Motor neuron (in vitro differentiated cells): ENCODE measurements at regions of chr13 and their contacts with region 1.

Region 1: DNA sequence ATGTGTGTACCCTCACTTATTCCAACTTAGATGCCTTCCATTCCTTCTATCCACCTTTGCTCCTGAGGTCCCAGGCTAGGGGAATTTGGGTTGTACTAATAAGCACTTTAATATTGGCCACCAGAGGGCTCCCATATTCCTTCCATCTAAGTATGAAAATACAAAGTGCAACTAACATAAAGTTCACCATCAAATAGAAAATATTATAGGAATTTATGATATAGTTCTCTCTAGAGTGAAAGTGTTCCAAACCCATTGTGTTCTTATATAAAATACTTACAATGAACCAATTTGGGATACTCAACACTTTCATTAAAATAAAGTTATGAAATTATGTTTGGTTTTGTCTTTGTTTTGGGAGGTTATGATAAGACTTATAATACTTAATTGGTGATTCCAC is 62.3 kb downstream of the ITGBL1 start:
- ATAC-seq: peak in 3 of 8 experiments; percentile 40 to 60 (median 57)
- H3K4me3 ChIP-seq: no peak overlapping the region
- H3K27ac ChIP-seq: no peak overlapping the region
- H3K4me1 ChIP-seq: no peaks in the 10 kb centered on the region

Region 2: DNA sequence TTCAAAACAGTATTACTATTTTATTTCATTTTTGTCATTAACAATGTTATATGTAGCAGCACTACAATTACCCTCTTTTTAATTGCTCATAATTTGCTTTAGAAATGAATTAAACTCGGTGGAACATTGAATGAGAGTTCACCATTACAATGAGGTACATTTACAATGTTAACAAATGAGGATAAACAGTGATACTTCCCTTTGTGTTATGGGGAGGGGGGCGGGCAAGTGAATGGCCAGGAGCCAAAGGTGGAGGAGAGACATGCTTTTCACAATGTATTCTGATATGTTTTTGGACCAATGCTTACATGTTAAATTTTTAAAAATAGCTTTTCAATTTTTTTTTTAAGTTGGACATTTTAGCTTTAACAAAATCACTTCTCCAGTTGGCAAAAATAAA is 132.7 kb before region 1 on chr13:
- in situ Hi-C with region 1: no loop called
- ATAC-seq: no peak
- H3K4me3 ChIP-seq: no peak overlapping the region
- H3K27ac ChIP-seq: no peak overlapping the region
- H3K4me1 ChIP-seq: no peaks in the 10 kb centered on the region

Region 3: DNA sequence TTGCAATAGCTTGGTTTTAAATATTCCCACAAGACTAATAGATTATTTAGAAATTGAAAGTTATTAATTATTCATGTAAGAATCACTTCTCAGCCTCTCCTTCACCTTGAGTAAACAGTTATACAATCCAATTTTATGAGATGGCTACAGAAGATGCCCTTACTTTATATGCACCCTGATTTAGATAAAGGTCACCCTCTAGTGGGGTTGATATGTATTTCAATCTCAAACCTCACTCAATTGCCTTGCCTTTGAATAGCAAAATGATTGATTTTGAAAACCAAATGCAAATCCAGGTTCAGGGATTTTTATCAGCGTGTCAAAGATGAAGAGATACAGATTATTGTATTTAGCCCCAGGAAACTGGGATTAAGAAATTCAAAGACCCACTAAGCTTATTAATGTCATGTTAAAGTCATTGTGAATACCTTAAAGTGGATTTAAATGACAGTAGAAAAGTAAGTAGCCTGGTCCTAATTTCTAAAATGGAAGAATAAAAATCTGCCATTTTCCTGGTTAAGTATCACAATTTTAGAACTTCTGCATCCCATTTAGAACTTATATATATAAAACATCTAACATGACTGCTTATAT is 242.8 kb after region 1 on chr13:
- in situ Hi-C with region 1: loop called in 3 of 9 experiments (anchors 10 kb)
- ATAC-seq: peak in 4 of 8 experiments; percentile 44 to 80 (median 74)
- H3K4me3 ChIP-seq: no peak overlapping the region
- H3K27ac ChIP-seq: no peak overlapping the region
- H3K4me1 ChIP-seq: peaks cover 0 to 6% of the 10 kb centered on the region in 2 donors

Region 4: DNA sequence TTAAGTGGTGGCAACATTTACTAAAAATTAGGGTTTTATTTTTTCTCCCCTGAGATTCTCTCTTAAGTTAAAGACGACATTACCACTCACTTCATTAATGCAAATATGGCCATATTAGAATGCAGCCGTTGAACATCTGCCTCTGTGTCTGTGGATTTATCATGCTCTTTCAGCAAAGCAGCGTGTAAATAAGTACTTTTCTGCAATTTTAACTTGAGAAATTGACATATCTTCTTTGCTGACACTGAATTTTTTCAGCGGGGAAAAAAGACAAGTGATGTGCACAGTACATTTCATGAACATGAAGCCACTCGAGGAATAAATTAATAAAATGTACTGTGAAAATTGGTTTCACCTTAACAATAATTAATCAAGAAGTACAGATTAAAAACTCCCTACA is 344.1 kb after region 1 on chr13:
- in situ Hi-C with region 1: no loop called
- ATAC-seq: no peak
- H3K4me3 ChIP-seq: no peak overlapping the region
- H3K27ac ChIP-seq: no peak overlapping the region
- H3K4me1 ChIP-seq: peaks cover 0 to 4% of the 10 kb centered on the region in 2 donors

Region 5: DNA sequence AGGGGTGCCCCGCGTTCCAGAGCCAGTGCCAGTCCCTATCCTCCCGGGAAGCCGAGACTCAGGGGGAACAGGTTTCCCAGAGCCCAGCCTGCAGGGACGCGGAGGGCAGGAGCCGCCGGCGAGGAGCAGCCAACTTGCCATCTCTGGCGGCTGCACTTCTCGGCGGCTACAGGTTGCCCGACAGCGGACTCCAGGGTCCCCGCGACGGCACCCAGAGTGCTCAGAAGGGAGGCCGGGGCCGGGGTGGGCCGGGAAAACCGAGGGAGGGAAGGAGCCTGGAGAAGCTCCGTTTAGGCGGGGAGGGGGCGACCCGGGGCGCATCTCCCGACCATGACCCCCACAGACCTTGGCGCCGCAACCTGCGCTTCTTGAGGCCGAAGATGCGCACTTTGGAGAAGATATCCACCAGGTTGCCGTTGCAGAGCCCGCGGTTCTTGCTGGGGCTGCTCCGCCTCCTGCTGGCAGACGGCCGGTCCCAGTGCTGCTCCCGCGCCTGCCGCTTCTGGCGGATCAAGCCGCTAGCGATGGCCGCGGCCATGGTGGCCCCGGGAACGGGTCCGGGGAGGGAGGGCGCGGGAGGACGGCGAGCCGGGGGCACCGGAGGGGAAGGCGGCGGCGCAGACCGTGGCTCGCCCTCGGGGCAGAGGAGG is 401.4 kb after region 1 on chr13:
- in situ Hi-C with region 1: loop called in 3 of 9 experiments (anchors 25 kb)
- ATAC-seq: peak; percentile 72 to 90 (median 80)
- H3K4me3 ChIP-seq: peak overlapping the region; percentile 42 to 65 (median 51)
- H3K27ac ChIP-seq: no peak overlapping the region
- H3K4me1 ChIP-seq: peaks cover 9 to 15% of the 10 kb centered on the region in 2 donors